Cardiac septum (tissue), 1 donor: ENCODE measurements at regions of chr12 and their contacts with region 1.

Region 1: GRCh38 chr12:49673446-49674317 is 33.5 kb downstream of the FMNL3 start:
- DNase-seq: peak; percentile 94

Region 2: DNA sequence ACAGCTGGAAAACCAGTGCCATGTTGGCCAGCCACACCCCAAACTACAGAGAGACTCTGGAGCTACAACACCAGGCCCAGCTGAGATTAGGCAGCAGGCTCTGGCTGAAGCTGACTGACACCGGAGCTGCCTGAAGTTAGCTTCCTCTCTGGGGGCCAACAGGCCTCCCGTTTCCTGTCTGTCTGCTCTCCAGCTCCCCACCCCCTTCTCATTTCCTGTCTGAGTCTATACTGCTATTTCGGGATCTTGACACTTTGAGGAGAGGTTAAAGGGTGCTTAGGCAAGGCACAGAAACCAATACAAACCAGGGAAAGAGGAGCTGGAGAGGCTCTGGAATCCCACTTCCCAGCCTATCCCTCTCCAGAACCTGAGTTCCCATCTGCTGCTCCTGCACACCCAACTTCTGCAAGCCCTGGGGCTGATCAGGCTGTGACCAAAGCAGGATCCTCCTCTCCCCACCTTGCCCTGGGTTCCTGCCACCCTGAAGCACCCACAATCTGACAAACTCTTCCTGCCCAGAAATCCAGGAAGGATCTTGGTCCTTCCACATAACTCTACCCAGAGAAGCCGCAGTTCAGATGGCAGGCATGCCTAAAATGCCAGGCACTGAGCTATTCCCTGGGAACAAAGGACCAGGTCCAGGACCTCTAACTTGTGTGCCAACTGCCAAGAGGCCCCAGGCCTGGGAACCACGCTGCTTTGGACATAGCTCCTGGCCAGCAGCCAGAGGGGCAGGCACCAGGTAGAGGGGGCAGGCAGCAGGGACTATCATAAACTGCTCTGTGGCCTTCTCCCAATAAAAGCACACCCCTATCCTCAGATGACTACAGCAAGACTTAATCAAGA is 10.5 kb before region 1 on chr12:
- intact Hi-C with region 1: loop called (anchors 1 kb)
- DNase-seq: peak; percentile 91

Region 3: DNA sequence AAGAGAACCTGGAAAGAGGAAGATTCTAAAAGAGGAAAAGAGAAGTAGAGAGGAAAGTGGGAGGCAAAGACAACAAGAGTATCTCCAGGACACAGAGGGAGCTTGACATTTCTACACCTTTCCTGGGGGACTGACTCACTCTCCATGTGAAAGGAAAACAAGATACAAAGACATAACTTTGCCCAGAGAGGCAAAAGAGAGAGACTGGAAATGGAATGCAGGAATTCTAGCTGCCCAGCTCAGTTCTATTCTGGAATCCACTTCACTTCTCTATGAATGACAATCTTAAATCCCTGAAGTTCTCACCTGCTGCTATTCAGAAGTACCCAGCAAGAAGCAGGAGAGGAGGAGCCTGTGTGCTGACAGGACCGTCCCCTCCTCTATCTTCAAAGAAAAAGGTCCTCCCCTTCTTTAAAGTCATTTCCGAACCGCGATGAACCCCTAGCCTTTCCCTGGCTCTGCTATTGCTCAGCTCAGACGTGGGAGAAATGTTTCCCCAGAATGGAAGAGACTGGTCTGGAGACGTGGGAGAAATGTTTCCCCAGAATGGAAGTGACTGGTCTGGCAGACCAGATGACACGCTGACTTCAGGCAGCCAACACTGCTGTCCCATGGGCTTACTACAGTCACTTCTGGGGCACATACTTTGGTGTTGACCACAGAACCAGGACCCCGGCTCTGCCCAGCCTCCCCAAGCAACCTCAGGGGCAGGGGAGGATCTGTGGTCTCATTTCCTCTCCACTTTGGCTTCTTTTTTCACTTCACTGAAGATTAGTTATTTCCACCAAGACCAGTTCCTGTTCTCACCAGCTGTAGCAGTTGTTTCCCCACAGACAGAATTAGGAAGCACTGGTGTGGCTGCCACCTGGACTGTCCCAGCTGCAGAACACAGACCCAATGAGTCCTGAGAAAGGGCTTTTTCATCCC is 25.2 kb after region 1 on chr12:
- intact Hi-C with region 1: loop called (anchors 2 kb)
- DNase-seq: no peak

Region 4: GRCh38 chr12:49707128-49707811 is 33.6 kb after region 1 on chr12 and contains the start of gene FMNL3:
- intact Hi-C with region 1: loop called (anchors 2 kb)
- DNase-seq: peak; percentile 99
- total RNA-seq, gene FMNL3: 19.8 TPM

Region 5: GRCh38 chr12:49808686-49809380 is 135.2 kb after region 1 on chr12:
- intact Hi-C with region 1: no loop called
- DNase-seq: no peak